Activated CD4-positive, alpha-beta T cell treated with anti-CD3 and anti-CD28 coated beads for 36 hours (primary cell): ENCODE measurements at regions of chr14 and their contacts with region 1.

Region 1: GRCh38 chr14:32939254-32940065 is 781 bp downstream of the NPAS3 start:
- DNase-seq: peak; percentile 57
- ATAC-seq: peak; percentile 83
- H3K4me3 Mint-ChIP-seq: peak overlapping the region; percentile 65
- H3K27ac Mint-ChIP-seq: no peak overlapping the region
- H3K4me1 Mint-ChIP-seq: peaks cover 10% of the 10 kb centered on the region
- H3K27me3 Mint-ChIP-seq: peaks cover 47% of the 10 kb centered on the region

Region 2: DNA sequence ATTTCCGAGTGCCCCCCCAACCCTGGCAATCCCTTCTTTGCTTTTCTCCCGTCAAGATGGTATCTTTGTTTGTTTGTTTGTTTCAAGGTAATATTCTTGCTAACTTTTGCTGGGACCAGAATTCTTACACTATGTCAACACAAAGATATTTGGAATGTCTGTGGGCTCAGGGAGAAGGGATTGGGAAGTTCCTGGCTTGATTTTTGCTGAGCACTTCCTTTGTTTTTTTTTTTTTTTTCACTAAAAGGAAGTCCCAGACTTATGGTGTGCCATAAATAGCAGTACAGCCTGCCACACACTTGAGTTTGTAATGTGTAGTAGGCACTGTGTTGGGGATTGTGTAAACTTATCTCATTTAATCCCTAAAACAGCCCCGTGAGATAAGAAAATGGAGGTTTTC is 748.8 kb before region 1 on chr14:
- CTCF ChIA-PET with region 1: no interaction called
- POLR2A ChIA-PET with region 1: no interaction called
- intact Hi-C with region 1: loop called in 1 of 2 experiments (anchors 5 kb)
- DNase-seq: no peak
- ATAC-seq: no peak
- H3K4me3 Mint-ChIP-seq: no peak overlapping the region
- H3K27ac Mint-ChIP-seq: no peak overlapping the region
- H3K4me1 Mint-ChIP-seq: peaks cover 18% of the 10 kb centered on the region
- H3K27me3 Mint-ChIP-seq: peaks cover 9% of the 10 kb centered on the region

Region 3: DNA sequence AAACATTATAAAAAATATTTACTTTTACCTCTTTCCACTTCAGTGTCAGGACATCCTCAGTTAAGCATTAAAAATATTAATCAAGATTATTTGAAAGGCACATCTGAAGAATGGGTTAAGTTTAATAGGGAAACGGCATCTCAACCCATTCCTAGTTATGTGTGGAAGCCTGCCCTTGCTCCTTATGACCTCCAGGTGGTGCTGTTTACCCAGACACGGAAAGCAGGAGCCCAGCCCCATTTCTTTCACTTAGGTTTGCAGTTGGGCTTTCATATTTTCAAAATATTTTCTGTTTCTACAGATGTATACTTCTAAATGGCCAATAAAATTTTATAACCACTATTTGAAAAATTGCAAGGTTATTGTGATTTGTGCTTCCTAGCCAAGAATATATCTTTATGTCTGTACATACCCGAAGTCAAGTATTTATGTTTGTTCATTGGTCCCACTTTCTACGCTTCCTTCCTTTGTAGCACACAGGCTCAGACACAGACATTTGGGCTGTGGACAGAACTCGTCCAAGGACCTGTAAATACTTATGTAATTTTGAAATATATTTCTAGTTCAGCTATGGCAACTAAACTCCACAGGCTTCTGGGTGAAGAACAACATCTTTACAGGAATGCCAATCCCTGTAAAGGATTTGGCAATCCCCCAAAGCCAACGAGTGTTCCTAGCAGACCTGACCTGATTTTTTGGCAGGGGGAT is 363.2 kb before region 1 on chr14:
- CTCF ChIA-PET with region 1: no interaction called
- POLR2A ChIA-PET with region 1: no interaction called
- intact Hi-C with region 1: loop called in 1 of 2 experiments (anchors 10 kb)
- DNase-seq: peak; percentile 46
- ATAC-seq: no peak
- H3K4me3 Mint-ChIP-seq: no peak overlapping the region
- H3K27ac Mint-ChIP-seq: no peak overlapping the region
- H3K4me1 Mint-ChIP-seq: no peaks in the 10 kb centered on the region
- H3K27me3 Mint-ChIP-seq: peaks cover 12% of the 10 kb centered on the region

Region 4: GRCh38 chr14:32593290-32593942 is 346.0 kb before region 1 on chr14:
- CTCF ChIA-PET with region 1: no interaction called
- POLR2A ChIA-PET with region 1: no interaction called
- intact Hi-C with region 1: no loop called
- DNase-seq: no peak
- ATAC-seq: no peak
- H3K4me3 Mint-ChIP-seq: no peak overlapping the region
- H3K27ac Mint-ChIP-seq: no peak overlapping the region
- H3K4me1 Mint-ChIP-seq: no peaks in the 10 kb centered on the region
- H3K27me3 Mint-ChIP-seq: no peaks in the 10 kb centered on the region

Region 5: DNA sequence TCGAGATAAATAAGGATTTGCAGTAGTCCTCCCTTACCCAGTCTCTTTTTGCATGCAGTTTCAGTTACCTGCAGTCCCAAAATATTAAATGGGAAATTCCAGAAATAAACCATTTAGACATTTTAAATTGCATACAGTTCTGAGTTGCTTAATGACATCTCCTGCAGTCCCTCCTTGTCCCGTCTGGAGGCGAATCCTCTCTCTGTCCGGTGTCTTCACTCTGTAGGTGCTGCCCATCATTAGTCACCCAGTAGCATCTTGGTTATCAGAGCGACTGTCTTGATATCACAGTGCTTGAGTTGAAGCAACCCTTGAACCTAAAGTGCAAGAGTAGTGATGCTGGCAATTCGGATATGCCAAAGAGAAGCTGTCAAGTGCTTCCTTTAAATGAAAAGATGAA is 100.8 kb before region 1 on chr14:
- CTCF ChIA-PET with region 1: no interaction called
- POLR2A ChIA-PET with region 1: no interaction called
- intact Hi-C with region 1: no loop called
- DNase-seq: no peak
- ATAC-seq: no peak
- H3K4me3 Mint-ChIP-seq: no peak overlapping the region
- H3K27ac Mint-ChIP-seq: no peak overlapping the region
- H3K4me1 Mint-ChIP-seq: no peaks in the 10 kb centered on the region
- H3K27me3 Mint-ChIP-seq: no peaks in the 10 kb centered on the region

Region 6: GRCh38 chr14:33081259-33081658 is 141.8 kb after region 1 on chr14:
- CTCF ChIA-PET with region 1: no interaction called
- POLR2A ChIA-PET with region 1: no interaction called
- intact Hi-C with region 1: no loop called
- DNase-seq: no peak
- ATAC-seq: no peak
- H3K4me3 Mint-ChIP-seq: no peak overlapping the region
- H3K27ac Mint-ChIP-seq: no peak overlapping the region
- H3K4me1 Mint-ChIP-seq: no peaks in the 10 kb centered on the region
- H3K27me3 Mint-ChIP-seq: no peaks in the 10 kb centered on the region

Region 7: DNA sequence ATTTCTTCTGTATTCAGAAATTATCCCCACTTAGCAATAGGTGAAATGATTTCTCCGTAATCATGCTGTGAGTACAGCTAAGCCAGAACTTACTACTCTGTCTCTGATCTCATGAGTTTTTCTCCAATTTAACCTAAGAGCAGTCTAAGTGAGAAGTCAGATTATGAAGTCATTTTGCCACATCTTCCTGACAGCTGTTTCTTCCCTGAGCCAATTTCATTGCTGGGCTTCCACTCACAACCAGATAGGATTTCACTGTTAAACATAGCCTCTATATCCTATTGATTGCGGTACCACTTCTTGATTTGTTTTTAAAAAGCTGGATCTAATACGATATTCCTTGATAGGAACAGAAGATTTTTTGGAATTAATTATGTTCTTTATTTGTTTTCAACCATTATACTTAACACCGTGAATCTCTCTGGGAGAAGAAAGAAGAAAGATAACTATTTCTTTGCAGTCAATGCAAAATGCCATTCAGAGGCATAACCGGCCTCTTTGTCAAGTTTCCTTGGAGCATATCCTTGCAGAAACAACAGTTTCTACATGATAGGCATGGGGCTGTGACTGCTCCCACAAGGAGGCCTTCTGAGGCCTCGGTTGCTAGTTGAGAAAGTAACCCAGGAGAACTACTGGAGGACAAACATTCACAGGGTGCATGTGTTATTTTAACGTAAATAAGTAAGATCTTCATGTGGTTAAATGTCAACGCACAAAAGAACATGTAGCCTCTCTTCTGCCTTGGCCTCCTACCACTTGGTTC is 211.4 kb after region 1 on chr14:
- CTCF ChIA-PET with region 1: no interaction called
- POLR2A ChIA-PET with region 1: no interaction called
- intact Hi-C with region 1: no loop called
- DNase-seq: no peak
- ATAC-seq: no peak
- H3K4me3 Mint-ChIP-seq: no peak overlapping the region
- H3K27ac Mint-ChIP-seq: no peak overlapping the region
- H3K4me1 Mint-ChIP-seq: no peaks in the 10 kb centered on the region
- H3K27me3 Mint-ChIP-seq: no peaks in the 10 kb centered on the region